Naive thymus-derived CD4-positive, alpha-beta T cell (primary cell): ENCODE measurements at regions of chr1 and their contacts with region 1.

Region 1: DNA sequence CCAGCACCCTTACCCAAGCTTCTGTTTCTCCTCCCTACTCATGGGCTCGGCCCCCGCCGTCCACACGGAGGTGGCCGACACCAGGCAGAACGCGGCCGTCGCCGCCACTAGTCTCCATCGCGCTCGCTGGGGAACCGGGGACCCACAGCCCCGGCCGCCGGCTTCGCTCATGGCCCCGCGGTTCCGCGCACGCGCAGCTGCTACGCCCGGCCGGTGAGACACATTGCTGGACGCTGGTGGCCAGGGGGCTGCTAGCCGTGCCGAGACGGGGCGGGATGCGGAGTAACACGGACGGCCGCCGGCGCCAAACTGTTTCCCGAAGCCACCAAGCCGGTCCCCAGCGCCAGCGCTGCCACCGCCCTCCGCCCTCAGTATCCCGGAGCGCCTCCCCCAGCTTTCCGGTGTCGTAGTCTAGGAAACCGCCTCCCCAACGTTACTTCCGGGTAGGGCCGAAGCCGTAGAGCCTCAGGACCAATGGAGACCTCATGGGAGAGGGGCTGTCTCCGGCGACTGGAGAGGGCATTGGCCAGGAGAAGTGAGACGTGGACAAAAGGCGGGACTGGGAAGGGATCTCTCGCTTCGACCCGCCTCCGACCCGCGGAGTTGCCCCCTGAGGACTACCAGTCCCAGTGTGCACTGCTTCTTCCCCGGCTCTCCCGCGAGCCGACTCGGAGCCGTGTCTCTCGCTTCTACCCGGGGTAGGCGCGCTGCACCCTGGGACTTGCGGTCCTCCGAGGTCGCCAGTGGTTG is at the start of gene EDEM3:
- DNase-seq: peak; percentile 86 to 100 (median 99)
- ATAC-seq: peak; percentile 96
- H3K4me3 ChIP-seq: peak within 1 kb of the TSS; percentile 84
- H3K4me3 Mint-ChIP-seq: peak within 1 kb of the TSS; percentile 87 to 96 (median 94)
- H3K27ac ChIP-seq: peak within 1 kb of the TSS; percentile 91
- H3K27ac Mint-ChIP-seq: peak within 1 kb of the TSS; percentile 71 to 97 (median 93)
- H3K4me1 ChIP-seq: peaks cover 9 to 13% of the 10 kb centered on the region in 2 donors
- H3K4me1 Mint-ChIP-seq: peaks cover 21 to 50% (median 46%) of the 10 kb centered on the region in 7 donors
- H3K27me3 ChIP-seq: no peaks in the 10 kb centered on the region
- H3K27me3 Mint-ChIP-seq: peaks cover 0 to 13% (median 0%) of the 10 kb centered on the region in 5 donors
- total RNA-seq, gene EDEM3: 21.0 to 55.9 (median 33.9) TPM

Region 2: GRCh38 chr1:183956559-183957188 is 798.0 kb before region 1 on chr1:
- CTCF ChIA-PET with region 1: no interaction called
- POLR2A ChIA-PET with region 1: no interaction called
- intact Hi-C with region 1: loop called in 1 of 2 experiments (anchors 5 kb)
- DNase-seq: peak in 8 of 9 donors; percentile 60 to 82 (median 71)
- ATAC-seq: peak; percentile 99
- H3K4me3 ChIP-seq: no peak overlapping the region
- H3K4me3 Mint-ChIP-seq: peak overlapping the region in 8 of 10 donors; percentile 10 to 76 (median 30)
- H3K27ac ChIP-seq: peak overlapping the region; percentile 15
- H3K27ac Mint-ChIP-seq: no peak overlapping the region
- H3K4me1 ChIP-seq: peaks cover 17 to 36% of the 10 kb centered on the region in 2 donors
- H3K4me1 Mint-ChIP-seq: peaks cover 0 to 13% (median 9%) of the 10 kb centered on the region in 7 donors
- H3K27me3 ChIP-seq: no peaks in the 10 kb centered on the region
- H3K27me3 Mint-ChIP-seq: no peaks in the 10 kb centered on the region

Region 3: GRCh38 chr1:184805667-184806295 is 51.1 kb after region 1 on chr1:
- CTCF ChIA-PET with region 1: interaction called, 3 read pairs
- POLR2A ChIA-PET with region 1: no interaction called
- intact Hi-C with region 1: loop called (anchors 2 to 5 kb)
- DNase-seq: peak; percentile 49 to 79 (median 68)
- ATAC-seq: peak; percentile 94
- H3K4me3 ChIP-seq: no peak overlapping the region
- H3K4me3 Mint-ChIP-seq: peak overlapping the region in 2 of 10 donors; percentile 2 to 27
- H3K27ac ChIP-seq: no peak overlapping the region
- H3K27ac Mint-ChIP-seq: peak overlapping the region in 2 of 9 donors; percentile 7 to 16
- H3K4me1 ChIP-seq: no peaks in the 10 kb centered on the region
- H3K4me1 Mint-ChIP-seq: peaks cover 4 to 6% (median 5%) of the 10 kb centered on the region in 7 donors
- H3K27me3 ChIP-seq: no peaks in the 10 kb centered on the region
- H3K27me3 Mint-ChIP-seq: no peaks in the 10 kb centered on the region

Region 4: DNA sequence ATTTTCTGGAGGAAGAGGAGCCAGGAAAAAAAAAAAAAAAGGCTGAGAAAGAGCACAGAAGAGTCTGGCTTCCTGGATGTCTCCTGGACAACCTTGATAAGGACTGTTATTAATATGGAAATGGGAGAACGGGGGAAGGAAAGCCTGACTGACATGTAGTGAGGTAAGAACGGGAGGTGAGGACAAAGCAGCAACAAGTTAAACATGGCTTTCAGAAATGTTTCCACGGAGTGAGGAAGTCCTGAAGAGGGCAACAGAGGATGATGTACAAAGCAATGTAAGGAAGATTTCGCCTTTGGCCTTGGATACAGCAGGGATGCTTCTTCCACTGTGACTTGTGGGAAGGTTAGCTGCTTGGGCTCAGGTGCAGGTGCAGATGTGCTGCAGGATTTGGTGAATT is 231.6 kb after region 1 on chr1:
- CTCF ChIA-PET with region 1: no interaction called
- POLR2A ChIA-PET with region 1: no interaction called
- intact Hi-C with region 1: no loop called
- DNase-seq: no peak
- ATAC-seq: no peak
- H3K4me3 ChIP-seq: no peak overlapping the region
- H3K4me3 Mint-ChIP-seq: no peak overlapping the region
- H3K27ac ChIP-seq: no peak overlapping the region
- H3K27ac Mint-ChIP-seq: no peak overlapping the region
- H3K4me1 ChIP-seq: no peaks in the 10 kb centered on the region
- H3K4me1 Mint-ChIP-seq: peaks cover 0 to 7% (median 0%) of the 10 kb centered on the region in 7 donors
- H3K27me3 ChIP-seq: no peaks in the 10 kb centered on the region
- H3K27me3 Mint-ChIP-seq: peaks cover 17 to 44% (median 23%) of the 10 kb centered on the region in 5 donors

Region 5: DNA sequence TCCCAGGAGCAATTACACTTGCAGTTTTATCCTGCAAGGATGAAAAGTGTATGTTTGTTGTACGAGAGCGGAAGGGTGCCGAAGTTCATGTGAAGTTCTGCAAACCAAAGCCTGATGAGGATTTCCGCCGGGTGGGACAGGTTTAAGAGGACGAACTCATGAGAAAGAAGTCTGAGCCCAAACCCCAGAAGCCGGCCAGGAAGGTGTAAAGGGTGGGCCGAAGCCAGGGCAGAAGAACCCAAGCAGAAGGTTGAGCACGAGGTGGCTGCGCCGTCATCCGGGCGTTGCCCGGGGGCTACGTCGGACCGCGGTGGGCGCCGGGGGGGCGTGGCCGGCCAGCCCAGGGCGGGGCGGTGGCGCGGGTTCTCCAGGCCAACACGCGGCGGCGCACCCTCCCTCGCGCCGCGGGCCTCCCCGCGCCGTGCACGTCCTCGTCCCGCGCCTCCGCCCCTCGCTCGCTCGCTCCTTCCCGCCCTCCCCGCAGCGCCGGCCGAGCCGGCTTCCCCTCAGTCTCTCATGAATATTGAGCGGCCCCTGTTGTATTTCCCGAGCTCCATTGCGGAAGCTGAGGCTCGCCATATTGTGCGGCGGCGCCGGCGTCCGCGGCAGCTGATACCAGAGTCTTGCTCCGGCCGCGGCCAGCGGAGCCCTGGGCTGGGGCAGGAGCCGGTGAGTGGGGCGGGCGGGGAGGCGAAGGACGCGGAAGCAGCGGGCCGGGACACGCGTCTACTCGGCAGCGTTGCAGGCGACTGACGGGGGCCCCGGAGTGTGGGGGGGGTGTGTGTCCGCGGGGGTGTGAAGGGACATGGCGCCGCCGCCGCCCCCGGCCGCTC is 290.5 kb after region 1 on chr1 and contains the start of gene RNF2:
- CTCF ChIA-PET with region 1: no interaction called
- POLR2A ChIA-PET with region 1: no interaction called
- intact Hi-C with region 1: loop called (anchors 1 kb)
- DNase-seq: peak; percentile 64 to 80 (median 77)
- ATAC-seq: peak; percentile 95
- H3K4me3 ChIP-seq: peak within 1 kb of the TSS; percentile 74
- H3K4me3 Mint-ChIP-seq: peak within 1 kb of the TSS; percentile 87 to 96 (median 92)
- H3K27ac ChIP-seq: peak within 1 kb of the TSS; percentile 75
- H3K27ac Mint-ChIP-seq: peak within 1 kb of the TSS; percentile 69 to 96 (median 88)
- H3K4me1 ChIP-seq: peaks cover 11 to 15% of the 10 kb centered on the region in 2 donors
- H3K4me1 Mint-ChIP-seq: peaks cover 27 to 56% (median 45%) of the 10 kb centered on the region in 7 donors
- H3K27me3 ChIP-seq: no peaks in the 10 kb centered on the region
- H3K27me3 Mint-ChIP-seq: peaks cover 0 to 26% (median 0%) of the 10 kb centered on the region in 5 donors
- total RNA-seq, gene RNF2: 14.9 to 27.7 (median 19.6) TPM

Region 6: DNA sequence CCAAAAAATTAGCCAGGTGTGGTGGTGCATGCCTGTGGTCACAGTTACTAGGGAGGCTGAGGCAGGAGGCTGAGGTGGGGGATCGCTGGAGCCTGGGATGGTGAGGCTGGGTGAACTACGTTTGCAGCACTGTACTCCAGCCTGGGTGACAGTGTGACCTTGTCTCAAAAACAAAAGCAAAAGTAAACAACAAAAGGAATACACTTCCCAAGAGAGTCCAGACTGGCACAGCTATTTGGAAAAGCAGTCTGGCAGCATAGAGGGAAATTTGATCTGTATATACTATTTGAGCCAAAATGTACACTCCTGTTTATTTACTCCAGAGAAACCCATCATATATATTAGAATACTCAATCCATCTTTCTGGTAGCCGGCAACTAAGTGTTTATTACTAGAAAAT is 872.5 kb after region 1 on chr1:
- CTCF ChIA-PET with region 1: no interaction called
- POLR2A ChIA-PET with region 1: no interaction called
- intact Hi-C with region 1: no loop called
- DNase-seq: no peak
- ATAC-seq: no peak
- H3K4me3 ChIP-seq: no peak overlapping the region
- H3K4me3 Mint-ChIP-seq: no peak overlapping the region
- H3K27ac ChIP-seq: no peak overlapping the region
- H3K27ac Mint-ChIP-seq: no peak overlapping the region
- H3K4me1 ChIP-seq: no peaks in the 10 kb centered on the region
- H3K4me1 Mint-ChIP-seq: peaks cover 0 to 7% (median 0%) of the 10 kb centered on the region in 7 donors
- H3K27me3 ChIP-seq: no peaks in the 10 kb centered on the region
- H3K27me3 Mint-ChIP-seq: no peaks in the 10 kb centered on the region

Region 7: DNA sequence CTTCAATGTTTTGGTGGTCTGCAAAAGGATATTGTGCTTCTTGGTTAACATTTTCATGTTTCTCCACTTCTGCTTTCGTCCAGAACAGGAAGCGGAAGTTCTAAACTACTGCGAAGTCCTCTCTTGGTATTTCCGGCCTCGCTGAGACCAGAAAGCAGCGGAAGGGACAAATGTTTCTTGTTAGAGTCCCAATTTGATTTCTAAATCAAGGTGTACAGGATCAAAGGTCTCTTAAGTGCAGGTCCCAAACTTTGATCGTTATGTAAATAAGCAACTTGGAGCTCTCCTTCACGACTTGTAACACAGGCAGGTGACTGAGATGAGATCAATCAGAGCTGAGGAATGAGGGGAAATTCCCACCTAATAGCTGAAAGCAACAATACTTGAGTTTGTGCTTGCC is 939.4 kb after region 1 on chr1:
- CTCF ChIA-PET with region 1: no interaction called
- POLR2A ChIA-PET with region 1: interaction called, 3 read pairs
- intact Hi-C with region 1: loop called in 1 of 2 experiments (anchors 2 kb)
- DNase-seq: peak in 4 of 9 donors; percentile 20 to 26 (median 22)
- ATAC-seq: peak; percentile 60
- H3K4me3 ChIP-seq: peak overlapping the region; percentile 31
- H3K4me3 Mint-ChIP-seq: peak overlapping the region; percentile 73 to 85 (median 78)
- H3K27ac ChIP-seq: peak overlapping the region; percentile 50
- H3K27ac Mint-ChIP-seq: peak overlapping the region; percentile 77 to 96 (median 88)
- H3K4me1 ChIP-seq: peaks cover 0 to 17% of the 10 kb centered on the region in 2 donors
- H3K4me1 Mint-ChIP-seq: peaks cover 11 to 27% (median 14%) of the 10 kb centered on the region in 7 donors
- H3K27me3 ChIP-seq: no peaks in the 10 kb centered on the region
- H3K27me3 Mint-ChIP-seq: peaks cover 0 to 27% (median 9%) of the 10 kb centered on the region in 5 donors